ENCODE measurements at regions of chr2 and their contacts with region 1.

Region 1: GRCh38 chr2:38264396-38265281 is 112.4 kb downstream of the ATL2 start:
- DNase-seq: no peak
- H3K4me3 Mint-ChIP-seq: no peak overlapping the region
- H3K27ac Mint-ChIP-seq: no peak overlapping the region
- H3K4me1 Mint-ChIP-seq: peaks cover 43% of the 10 kb centered on the region
- H3K27me3 Mint-ChIP-seq: peaks cover 9% of the 10 kb centered on the region

Region 2: DNA sequence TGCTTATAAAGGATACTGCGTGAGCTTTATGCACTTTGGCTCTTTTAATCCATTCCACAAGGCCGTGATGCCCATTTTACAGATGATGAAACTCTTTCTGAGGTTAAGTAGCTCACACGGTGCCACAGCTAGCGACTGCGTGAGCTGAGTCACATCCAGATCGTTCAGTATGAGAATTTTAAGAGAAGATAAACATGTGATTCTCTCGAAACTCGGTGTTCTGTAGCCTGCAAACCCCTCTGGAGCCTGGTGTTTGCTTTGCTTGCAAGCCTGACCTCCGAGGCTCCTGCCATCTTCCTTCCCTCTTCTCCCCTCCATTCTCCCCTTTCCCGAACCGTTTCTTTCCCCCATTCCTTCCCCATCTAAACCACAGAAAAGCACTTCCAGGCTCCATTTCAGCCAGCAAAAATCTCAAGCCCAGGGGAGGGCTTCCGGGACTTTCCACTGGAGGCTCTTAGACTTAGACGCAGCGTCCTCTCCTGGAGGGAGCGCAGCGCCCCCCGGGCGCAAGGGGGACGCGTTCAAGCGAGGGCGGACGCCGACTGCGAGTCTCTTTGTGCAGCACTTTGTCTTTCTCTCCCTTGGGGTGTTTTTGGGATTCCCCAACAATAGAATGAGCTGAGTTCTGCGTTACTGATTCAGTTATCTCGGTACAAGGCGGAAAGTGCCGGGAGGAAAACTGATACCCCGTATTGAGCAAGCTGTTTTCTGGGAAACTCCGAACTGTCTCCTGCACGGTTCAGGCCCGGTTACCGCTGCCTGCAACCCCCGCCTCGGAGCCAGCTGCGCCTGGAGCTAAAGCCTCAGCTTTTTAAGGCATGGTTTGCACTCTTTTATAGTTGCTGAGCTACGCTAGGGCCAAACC is 226.7 kb before region 1 on chr2:
- intact Hi-C with region 1: loop called (anchors 5 kb)
- DNase-seq: peak; percentile 67
- H3K4me3 Mint-ChIP-seq: peak overlapping the region; percentile 83
- H3K27ac Mint-ChIP-seq: peak overlapping the region; percentile 74
- H3K4me1 Mint-ChIP-seq: peaks cover 15% of the 10 kb centered on the region
- H3K27me3 Mint-ChIP-seq: peaks cover 38% of the 10 kb centered on the region

Region 3: DNA sequence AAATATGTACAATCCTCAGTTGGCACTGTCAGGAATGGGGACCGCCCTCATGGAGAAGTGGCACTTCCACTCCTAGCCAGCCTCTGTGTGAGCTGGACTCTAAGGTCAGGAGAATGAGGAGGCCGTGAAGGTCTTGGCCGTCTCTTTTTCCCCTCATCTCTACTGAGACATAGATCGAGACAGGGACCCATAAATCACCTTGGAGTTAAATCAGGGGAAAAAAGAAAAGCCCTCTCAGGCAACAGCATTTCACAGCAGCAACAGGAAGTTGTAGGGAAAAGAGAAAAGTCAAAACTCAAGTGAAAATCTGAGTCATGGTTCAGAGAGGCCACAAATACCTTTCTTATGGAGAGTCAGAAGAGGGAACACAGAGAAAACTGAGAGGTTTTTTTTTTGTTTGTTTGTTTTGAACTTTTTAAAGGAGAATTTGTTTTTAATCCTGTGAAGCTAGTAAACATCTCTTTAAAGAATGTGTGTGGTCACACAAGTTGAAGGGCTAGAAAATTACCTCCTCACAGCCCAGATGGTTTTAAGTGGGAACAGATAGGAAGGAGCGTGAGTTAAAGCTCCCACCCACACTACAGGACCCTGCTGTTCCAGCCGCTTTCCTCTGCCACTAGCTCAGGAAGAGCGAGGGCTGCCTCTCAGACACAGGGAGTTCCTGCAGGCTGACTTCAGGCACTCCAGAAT is 158.1 kb before region 1 on chr2:
- intact Hi-C with region 1: loop called (anchors 1 kb)
- DNase-seq: no peak
- H3K4me3 Mint-ChIP-seq: peak overlapping the region; percentile 60
- H3K27ac Mint-ChIP-seq: peak overlapping the region; percentile 79
- H3K4me1 Mint-ChIP-seq: peaks cover 20% of the 10 kb centered on the region
- H3K27me3 Mint-ChIP-seq: peaks cover 20% of the 10 kb centered on the region

Region 4: DNA sequence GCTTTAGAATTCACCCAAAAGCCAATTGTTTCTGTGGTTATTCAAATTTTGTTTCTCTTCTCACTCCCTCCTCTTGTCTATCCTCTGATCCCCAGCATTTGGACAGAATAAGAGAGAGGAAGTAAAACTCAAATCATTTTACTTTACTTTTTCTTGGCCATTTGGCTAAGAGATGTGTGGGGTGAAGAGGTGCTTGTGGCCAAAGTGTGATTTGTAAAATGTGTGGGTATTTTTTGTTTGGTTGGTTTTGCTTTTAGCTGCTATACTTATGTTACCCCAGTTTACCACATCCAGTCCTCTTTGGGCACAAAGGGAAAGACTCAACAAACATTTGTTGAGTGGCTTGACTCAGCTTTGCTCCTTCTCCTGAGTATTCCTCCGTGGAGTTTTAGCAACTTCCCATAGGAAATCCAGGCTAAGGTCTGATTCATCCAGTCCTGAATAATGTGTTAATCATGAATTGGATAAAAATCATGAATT is 79.6 kb before region 1 on chr2:
- intact Hi-C with region 1: loop called (anchors 2 kb)
- DNase-seq: no peak
- H3K4me3 Mint-ChIP-seq: no peak overlapping the region
- H3K27ac Mint-ChIP-seq: no peak overlapping the region
- H3K4me1 Mint-ChIP-seq: peaks cover 14% of the 10 kb centered on the region
- H3K27me3 Mint-ChIP-seq: peaks cover 15% of the 10 kb centered on the region